Activated T-helper 2 cell treated with anti-CD3 and anti-CD28 coated beads, Interferon-gamma antibody, Interleukin-2, Interleukin-4, amounts not matched to agents 10 μg/mL and 5 μg/mL and 100 μg/mL, durations not matched to agents 14 hours and 24 hours and 36 hours (primary cell): ENCODE measurements at regions of chr6 and their contacts with region 1.

Region 1: GRCh38 chr6:149211046-149211571 is 106.4 kb upstream of the TAB2 start:
- DNase-seq: no peak
- H3K4me3 Mint-ChIP-seq: peak overlapping the region; percentile 45
- H3K27ac Mint-ChIP-seq: no peak overlapping the region
- H3K4me1 Mint-ChIP-seq: peaks cover 10% of the 10 kb centered on the region
- H3K27me3 Mint-ChIP-seq: no peaks in the 10 kb centered on the region

Region 2: DNA sequence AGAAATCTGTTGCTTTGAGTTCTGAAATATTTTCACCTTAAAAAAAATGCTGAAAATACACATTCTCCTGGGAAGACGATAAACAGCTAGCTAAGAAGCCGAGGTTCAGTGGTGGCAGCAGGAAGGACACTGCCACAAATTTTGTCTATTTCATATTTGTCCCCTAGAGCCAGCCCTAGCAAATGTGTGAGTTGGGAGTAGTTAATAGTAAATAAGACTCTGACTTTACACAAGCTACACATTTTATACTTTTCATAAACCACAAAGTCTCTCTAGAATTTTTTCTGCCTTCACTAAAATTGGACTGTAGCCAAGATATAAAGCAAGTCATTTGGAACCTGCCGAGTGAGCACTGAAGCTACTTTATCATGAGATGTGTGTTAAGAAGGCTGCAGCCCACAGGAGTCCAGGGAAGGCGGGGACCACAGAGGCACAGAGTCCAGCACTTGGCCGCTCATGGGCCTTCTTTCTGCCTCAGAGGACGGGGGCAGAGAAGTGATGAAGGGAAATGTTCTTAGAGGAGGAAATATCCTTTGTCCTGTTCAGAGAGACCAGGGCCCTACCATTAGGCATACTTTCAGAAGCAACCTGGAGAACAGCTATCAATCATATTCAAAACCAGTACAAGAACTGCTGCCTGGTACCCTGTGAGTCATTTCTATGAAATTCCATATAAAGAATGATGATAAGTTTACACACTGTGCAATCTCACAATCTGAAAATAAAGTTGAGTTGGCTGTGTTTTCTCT is 135.3 kb before region 1 on chr6:
- intact Hi-C with region 1: loop called (anchors 1 kb)
- DNase-seq: no peak
- H3K4me3 Mint-ChIP-seq: no peak overlapping the region
- H3K27ac Mint-ChIP-seq: peak overlapping the region; percentile 85
- H3K4me1 Mint-ChIP-seq: peaks cover 48% of the 10 kb centered on the region
- H3K27me3 Mint-ChIP-seq: no peaks in the 10 kb centered on the region

Region 3: DNA sequence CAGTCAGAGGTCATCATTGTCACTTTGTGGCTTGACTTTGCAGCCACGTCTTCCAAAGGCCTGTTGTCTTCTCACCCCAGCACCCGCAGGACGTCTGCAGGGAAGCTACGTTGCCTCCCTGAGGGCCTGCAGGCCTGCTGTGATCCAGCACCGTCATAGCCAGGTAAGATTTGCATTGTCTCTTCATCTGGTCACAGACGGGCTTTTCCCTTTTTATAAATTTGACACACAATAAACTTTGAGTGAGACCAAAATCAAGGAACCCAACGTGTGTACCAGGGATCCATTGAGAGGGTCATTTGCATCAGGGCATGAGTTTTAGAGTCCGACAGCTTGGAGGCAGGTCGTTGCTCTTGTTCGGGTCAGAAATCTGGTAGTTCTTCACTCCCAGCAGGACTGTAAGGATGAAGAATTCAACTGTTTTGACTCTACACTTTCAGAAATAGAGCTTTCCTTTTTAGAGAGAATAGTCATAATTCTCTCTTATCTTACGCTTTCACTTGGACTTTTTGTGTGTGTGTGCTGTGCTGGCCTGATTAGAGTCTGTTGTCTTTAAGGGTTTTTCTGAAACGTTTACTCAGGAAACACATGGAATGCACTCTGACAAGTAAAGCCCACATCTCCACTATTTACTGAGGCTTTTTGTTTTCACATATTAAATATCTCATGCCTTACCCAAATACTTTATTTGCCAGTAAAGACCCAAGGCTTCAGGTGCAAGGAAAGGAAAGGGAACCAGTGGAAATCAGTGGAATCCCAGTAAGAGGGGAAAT is 70.8 kb before region 1 on chr6:
- intact Hi-C with region 1: loop called (anchors 1 kb)
- DNase-seq: no peak
- H3K4me3 Mint-ChIP-seq: peak overlapping the region; percentile 84
- H3K27ac Mint-ChIP-seq: peak overlapping the region; percentile 100
- H3K4me1 Mint-ChIP-seq: peaks cover 46% of the 10 kb centered on the region
- H3K27me3 Mint-ChIP-seq: no peaks in the 10 kb centered on the region

Region 4: DNA sequence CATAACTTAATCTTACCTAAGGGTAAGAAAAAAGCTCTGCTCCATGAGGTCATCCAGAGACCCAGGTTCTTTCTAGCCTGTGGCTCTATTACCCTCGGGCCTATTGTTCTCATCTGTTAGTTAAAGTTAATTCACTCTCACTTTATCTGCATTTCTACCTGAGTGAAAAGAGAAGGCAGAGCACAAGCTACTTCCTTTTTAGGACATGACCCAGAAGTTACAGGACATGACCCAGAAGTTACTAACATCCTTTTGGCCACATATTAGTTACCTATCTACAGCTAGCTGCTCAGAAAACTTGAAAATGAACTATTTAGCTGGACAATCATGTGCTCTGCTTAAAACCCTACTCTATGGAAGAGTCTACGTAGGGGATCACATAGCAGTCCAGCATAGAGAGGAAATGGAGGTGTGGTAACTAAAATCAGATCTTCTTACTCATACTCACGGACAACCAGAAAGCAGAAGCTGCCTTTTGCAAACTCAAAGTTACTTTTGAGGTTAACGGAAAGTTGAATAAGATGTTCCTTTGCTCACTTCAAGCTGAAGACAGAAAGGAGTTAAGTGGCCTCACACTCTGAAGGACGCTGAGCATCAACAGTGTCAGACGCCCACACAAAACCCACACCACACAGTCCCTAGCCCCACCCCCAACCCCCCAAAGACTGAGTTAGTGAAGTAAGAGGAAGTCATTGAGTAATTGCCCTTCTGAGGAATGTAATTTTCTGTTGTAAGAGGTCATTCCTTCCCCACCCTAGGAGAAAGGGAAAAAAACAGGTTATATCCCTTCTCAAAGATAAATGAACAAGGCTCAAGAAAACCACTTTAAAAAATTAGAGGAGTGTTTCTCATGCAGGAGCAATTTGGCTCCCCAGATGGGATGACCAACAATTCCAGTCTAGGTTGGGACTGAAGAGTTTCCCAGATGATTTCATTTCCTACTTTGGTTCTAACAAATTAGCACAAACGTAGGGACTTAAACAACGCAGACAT is 60.5 kb after region 1 on chr6:
- intact Hi-C with region 1: loop called (anchors 1 kb)
- DNase-seq: no peak
- H3K4me3 Mint-ChIP-seq: peak overlapping the region; percentile 58
- H3K27ac Mint-ChIP-seq: peak overlapping the region; percentile 83
- H3K4me1 Mint-ChIP-seq: peaks cover 39% of the 10 kb centered on the region
- H3K27me3 Mint-ChIP-seq: no peaks in the 10 kb centered on the region

Region 5: DNA sequence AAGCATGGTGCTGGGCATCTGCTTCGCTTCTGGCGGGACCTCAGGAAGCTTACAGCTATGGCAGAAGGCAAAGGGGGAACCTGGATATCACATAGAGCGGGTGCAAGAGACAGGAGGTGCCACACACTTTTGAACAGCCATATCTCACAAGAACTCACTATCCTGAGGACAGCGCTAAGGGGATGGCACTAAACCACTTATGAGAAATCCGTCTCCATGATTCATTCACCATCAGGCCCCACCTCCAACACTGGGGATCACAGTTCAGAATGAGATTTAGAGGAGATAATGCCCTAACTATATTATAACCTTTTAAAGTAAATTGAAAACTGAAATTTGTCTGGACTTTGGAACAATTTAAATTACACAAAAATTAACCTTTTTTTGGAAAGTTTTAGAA is 151.2 kb after region 1 on chr6:
- intact Hi-C with region 1: no loop called
- DNase-seq: no peak
- H3K4me3 Mint-ChIP-seq: no peak overlapping the region
- H3K27ac Mint-ChIP-seq: peak overlapping the region; percentile 45
- H3K4me1 Mint-ChIP-seq: peaks cover 62% of the 10 kb centered on the region
- H3K27me3 Mint-ChIP-seq: no peaks in the 10 kb centered on the region

Region 6: DNA sequence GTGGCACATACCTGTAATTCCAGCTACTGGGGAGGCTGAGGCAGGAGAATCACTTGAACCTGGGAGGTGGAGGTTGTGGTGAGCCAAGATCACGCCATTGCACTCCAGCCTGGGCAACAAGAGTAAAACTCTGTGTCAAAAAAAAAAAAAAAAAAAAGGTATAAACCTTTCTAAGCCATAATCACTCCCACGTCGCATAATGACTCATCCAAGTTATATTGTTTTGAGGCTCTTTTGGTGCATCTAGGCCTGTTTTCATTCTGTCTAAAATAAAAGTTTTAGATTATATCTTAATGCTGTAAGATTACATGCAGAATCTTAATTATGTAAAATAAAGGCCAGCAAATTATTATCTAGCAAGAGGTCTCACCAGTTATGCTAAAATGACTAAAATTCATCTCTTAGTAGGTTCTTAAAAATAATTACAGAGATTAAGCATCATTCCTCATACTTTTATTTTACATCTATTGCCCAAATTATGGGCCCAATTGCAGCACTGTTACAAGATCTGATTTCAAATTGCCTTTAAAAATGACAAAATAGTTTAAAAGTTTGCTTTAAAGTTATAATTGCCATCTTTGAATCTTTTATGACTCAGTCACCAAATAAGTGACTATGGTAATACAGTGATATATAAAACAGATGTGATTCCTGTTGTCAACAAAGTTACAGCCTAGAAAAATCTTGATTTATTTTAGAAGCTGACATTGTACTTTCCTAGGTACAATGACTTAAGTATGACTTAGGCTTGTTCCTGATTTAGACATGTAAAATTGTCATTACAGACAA is 178.6 kb after region 1 on chr6:
- intact Hi-C with region 1: loop called (anchors 5 kb)
- DNase-seq: no peak
- H3K4me3 Mint-ChIP-seq: no peak overlapping the region
- H3K27ac Mint-ChIP-seq: peak overlapping the region; percentile 9
- H3K4me1 Mint-ChIP-seq: peaks cover 60% of the 10 kb centered on the region
- H3K27me3 Mint-ChIP-seq: no peaks in the 10 kb centered on the region